ENCODE measurements at regions of chr5 and their contacts with region 1.

Region 1: GRCh38 chr5:6632917-6633468 is at the starts of genes NSUN2 and SRD5A1:
- DNase-seq: peak; percentile 94
- ATAC-seq: peak; percentile 99
- total RNA-seq, gene NSUN2: 30.1 TPM
- total RNA-seq, gene SRD5A1: 2.1 TPM

Region 2: GRCh38 chr5:5752844-5753243 is 880.1 kb before region 1 on chr5:
- intact Hi-C with region 1: no loop called
- DNase-seq: no peak
- ATAC-seq: no peak

Region 3: DNA sequence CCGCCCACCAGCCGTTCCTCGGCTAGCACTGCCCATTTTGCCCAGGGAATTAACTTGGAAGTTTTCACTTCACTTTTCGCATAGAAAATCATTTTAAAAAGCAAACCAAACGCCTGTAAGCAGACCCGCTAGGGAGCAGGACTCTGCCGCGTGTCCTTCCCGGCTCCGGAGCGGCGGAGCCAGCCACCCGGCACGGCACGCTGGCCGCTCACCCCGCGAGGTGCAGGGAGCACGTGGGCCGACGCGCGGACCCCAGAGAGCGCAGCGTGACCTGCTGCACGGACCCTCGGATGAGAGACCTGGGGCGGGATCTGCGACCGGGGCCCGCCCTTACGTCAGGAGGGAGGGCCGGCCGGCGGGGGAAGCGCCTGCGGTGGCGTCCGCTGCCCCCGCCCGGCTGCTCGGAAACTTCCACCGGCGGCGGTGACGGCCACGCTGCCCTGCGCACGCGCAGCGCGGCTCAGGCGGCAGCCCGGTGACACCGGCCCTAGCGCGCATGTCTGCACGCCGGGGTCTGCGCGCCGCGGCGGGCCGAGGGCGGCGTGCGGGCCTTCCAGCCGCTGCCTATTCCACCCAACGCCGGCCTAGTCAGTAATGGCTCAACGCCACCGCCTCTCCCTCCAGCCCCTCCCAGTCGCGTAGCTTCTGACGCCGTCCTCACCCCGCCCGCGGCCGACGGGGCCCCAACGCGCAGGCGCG is 79.7 kb after region 1 on chr5:
- intact Hi-C with region 1: loop called (anchors 2 kb)
- DNase-seq: peak; percentile 97
- ATAC-seq: peak; percentile 92

Region 4: DNA sequence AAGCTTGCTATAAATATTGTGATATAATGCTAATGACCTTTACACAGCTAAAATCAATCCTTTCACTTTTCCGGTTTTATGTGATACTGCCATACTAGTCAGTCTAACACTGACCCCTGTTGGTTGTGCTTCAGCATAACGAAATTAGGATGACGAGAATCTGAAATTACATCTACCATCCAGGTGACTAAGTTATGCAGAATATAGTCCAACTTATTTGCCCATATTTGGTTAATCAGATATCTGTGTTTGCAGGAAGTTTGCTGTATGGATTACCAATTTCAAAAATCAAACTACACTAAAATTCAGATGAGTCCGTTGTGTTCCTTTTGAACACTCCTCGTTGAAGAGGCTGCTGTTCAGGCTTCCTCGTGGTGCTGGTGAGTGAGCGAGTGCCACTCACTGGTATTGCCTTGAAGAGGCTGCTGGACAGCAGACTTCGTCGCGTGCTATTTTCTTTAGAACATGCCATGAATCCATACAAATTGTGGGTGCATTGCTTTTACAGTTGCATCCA is 112.8 kb after region 1 on chr5:
- intact Hi-C with region 1: loop called (anchors 5 kb)
- DNase-seq: no peak
- ATAC-seq: peak; percentile 87

Measured in Right ventricle myocardium superior (tissue), 1 donor.